Pancreas (tissue), 10 donors: ENCODE measurements at regions of chr18 and their contacts with region 1.

Region 1: DNA sequence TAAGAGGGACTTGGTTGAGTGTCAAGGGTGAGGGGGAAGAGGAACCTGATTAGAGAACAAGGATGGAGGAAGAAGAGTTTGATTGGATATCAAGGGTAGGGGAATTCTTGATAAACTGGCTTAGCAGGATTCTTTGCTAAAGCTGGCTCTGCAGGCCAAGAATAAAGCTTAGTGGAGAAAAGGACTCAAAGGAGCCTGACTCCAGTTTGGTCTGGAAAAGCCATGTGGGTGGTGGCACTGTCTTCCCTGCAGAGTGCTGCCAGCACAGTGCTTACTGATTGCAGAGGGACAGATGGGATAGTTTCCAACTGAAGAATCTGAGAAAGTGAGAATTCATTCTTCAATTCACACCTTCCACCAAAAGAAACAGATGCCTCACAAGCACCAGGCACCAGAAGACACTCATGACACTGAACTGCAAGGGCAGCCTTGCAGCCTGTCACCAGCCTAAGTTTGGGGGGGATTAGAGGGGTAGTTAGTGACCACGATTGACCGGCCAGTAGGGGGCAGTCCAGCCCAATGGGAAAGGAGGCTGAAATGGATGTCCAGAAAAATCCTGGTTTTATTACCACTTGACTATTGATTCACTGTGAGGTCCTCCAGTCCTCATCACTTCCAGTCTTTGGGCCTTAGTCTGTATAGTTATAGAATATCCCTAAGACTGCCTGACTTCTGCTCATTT is 334.5 kb downstream of the SMAD2 start:
- DNase-seq: no peak
- ATAC-seq: peak in 1 of 4 donors; percentile 30
- H3K4me3 ChIP-seq: no peak overlapping the region
- H3K27ac ChIP-seq: no peak overlapping the region
- H3K4me1 ChIP-seq: no peaks in the 10 kb centered on the region
- H3K27me3 ChIP-seq: no peaks in the 10 kb centered on the region
- CTCF ChIP-seq: no peak

Region 2: DNA sequence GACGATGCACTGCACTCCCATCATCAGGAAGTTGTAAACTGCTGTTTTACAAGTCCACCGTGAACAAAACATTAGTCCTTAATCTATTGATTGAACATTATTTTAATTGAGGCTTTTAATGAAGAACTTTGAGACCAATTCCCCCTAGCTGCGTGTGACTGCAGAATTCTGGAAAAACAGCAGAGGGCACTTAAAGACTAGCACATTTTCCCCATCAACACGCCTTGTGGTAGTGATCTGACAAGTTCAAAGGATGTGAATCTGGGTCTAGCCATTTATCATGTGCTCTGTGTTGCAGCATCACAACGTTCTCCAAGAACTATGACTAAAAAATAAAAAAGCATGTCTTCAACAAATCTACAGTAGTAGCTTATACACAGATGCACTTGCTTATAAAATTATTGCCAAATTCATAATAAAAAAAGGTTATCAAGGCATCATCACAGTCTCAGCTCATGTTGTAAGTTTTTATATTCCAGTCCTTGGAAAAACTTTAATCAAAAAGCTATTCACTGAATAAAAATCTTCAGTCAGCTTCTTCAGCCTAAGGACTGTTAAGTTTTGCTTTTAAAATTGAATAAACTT is 380.3 kb before region 1 on chr18:
- intact Hi-C with region 1: no loop called
- DNase-seq: peak in 1 of 6 donors; percentile 23
- ATAC-seq: peak in 3 of 4 donors; percentile 68 to 81 (median 76)
- H3K4me3 ChIP-seq: no peak overlapping the region
- H3K27ac ChIP-seq: no peak overlapping the region
- H3K4me1 ChIP-seq: no peaks in the 10 kb centered on the region
- H3K27me3 ChIP-seq: no peaks in the 10 kb centered on the region
- CTCF ChIP-seq: peak in 3 of 4 donors; percentile 33 to 38 (median 34)

Region 3: DNA sequence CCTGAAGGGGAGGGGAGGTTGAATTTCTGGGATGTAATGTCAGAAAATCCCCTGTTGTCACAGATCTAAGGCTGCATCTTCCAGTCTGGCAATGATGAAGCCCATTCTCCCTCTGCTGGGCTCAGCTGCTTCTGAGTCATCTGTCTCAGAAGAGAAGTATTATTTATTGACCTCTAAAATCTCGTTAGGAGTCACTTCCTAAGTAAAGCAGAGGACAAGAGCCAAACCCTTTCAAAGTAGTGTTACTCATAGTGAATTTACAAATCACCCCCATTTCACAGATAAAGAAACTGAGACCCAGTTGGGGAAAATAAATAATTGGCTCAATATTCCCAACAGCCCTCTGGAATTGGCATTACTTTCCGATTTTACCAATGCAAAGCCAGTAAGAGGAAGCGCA is 177.2 kb before region 1 on chr18:
- intact Hi-C with region 1: loop called in 1 of 3 experiments (anchors 10 kb)
- DNase-seq: peak in 1 of 6 donors; percentile 19
- ATAC-seq: peak in 2 of 4 donors; percentile 42 to 52
- H3K4me3 ChIP-seq: no peak overlapping the region
- H3K27ac ChIP-seq: no peak overlapping the region
- H3K4me1 ChIP-seq: no peaks in the 10 kb centered on the region
- H3K27me3 ChIP-seq: no peaks in the 10 kb centered on the region
- CTCF ChIP-seq: no peak